HCT116 (cell line): ENCODE measurements at regions of chr9 and their contacts with region 1.

Region 1: DNA sequence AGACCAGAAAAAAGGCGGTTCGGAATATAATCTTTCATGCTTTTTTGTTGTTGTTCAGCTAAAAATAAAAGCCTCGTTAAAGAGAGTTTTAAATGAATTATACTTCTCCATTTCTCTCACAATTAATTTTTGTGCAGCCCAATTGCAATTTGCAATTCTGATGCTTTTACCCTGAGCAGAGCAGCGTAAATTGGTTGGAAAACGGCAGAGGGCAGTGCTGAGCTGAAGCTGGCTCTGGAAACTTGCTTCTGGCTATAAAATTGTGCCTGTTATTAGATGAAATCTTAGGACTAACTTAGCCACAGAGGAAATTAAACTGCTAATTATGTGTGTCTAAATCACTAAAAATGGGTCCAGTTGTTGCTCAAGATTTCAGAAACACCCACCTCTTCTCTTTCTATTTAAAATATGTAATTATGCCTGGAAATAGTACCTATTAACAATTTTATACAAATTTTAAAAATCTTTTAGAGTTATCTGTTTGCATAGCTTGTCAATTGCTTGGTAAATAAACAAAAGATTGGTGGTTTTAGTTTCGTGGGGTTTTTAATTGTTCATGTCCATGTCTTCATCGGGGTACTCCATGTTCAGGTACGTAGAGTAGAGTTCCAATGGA is 441.8 kb upstream of the TLE4 start:
- DNase-seq: peak; percentile 7
- ATAC-seq: peak; percentile 75
- H3K4me3 ChIP-seq: no peak overlapping the region
- H3K27ac ChIP-seq: no peak overlapping the region
- H3K4me1 ChIP-seq: 0 out of 4 replicates have a peak, but pooled peaks cover 0 to 2% of the 10 kb centered on the region in 2 experiments
- H3K27me3 ChIP-seq: no peaks in the 10 kb centered on the region
- CTCF ChIP-seq: peak; percentile 25 to 84 (median 78); a peak in 5 of 6 replicates
- POLR2A ChIP-seq: no peak
- RAD21 ChIP-seq: peak; percentile 54

Region 2: GRCh38 chr9:78439190-78439865 is 690.6 kb before region 1 on chr9:
- CTCF ChIA-PET with region 1: no interaction called
- POLR2A ChIA-PET with region 1: no interaction called
- RAD21 ChIA-PET with region 1: no interaction called
- intact Hi-C with region 1: loop called (anchors 5 kb)
- DNase-seq: peak; percentile 62
- ATAC-seq: peak; percentile 90
- H3K4me3 ChIP-seq: no peak overlapping the region
- H3K27ac ChIP-seq: no peak overlapping the region
- H3K4me1 ChIP-seq: no peaks in the 10 kb centered on the region
- H3K27me3 ChIP-seq: peaks cover 9% of the 10 kb centered on the region; the same call in 1 of the 2 replicates
- CTCF ChIP-seq: peak; percentile 57 to 97 (median 87); a peak in 5 of 6 replicates
- POLR2A ChIP-seq: no peak
- RAD21 ChIP-seq: peak; percentile 85

Region 3: GRCh38 chr9:78601957-78602565 is 527.9 kb before region 1 on chr9:
- CTCF ChIA-PET with region 1: no interaction called
- POLR2A ChIA-PET with region 1: no interaction called
- RAD21 ChIA-PET with region 1: no interaction called
- intact Hi-C with region 1: loop called (anchors 5 kb)
- DNase-seq: peak; percentile 22
- ATAC-seq: peak; percentile 64; the same call in 1 of the 2 replicates
- H3K4me3 ChIP-seq: no peak overlapping the region
- H3K27ac ChIP-seq: no peak overlapping the region
- H3K4me1 ChIP-seq: no peaks in the 10 kb centered on the region
- H3K27me3 ChIP-seq: peaks cover 10% of the 10 kb centered on the region; the same call in 1 of the 2 replicates
- CTCF ChIP-seq: peak; percentile 44 to 86 (median 69); a peak in 5 of 6 replicates
- POLR2A ChIP-seq: no peak
- RAD21 ChIP-seq: peak; percentile 72

Region 4: GRCh38 chr9:78820855-78821822 is 308.8 kb before region 1 on chr9:
- CTCF ChIA-PET with region 1: no interaction called
- POLR2A ChIA-PET with region 1: no interaction called
- RAD21 ChIA-PET with region 1: no interaction called
- intact Hi-C with region 1: loop called (anchors 2 kb)
- DNase-seq: peak; percentile 24
- ATAC-seq: peak; percentile 84
- H3K4me3 ChIP-seq: no peak overlapping the region
- H3K27ac ChIP-seq: no peak overlapping the region
- H3K4me1 ChIP-seq: no peaks in the 10 kb centered on the region
- H3K27me3 ChIP-seq: no peaks in the 10 kb centered on the region
- CTCF ChIP-seq: peak; percentile 36 to 78 (median 59); a peak in 5 of 6 replicates
- POLR2A ChIP-seq: no peak
- RAD21 ChIP-seq: peak; percentile 59

Region 5: DNA sequence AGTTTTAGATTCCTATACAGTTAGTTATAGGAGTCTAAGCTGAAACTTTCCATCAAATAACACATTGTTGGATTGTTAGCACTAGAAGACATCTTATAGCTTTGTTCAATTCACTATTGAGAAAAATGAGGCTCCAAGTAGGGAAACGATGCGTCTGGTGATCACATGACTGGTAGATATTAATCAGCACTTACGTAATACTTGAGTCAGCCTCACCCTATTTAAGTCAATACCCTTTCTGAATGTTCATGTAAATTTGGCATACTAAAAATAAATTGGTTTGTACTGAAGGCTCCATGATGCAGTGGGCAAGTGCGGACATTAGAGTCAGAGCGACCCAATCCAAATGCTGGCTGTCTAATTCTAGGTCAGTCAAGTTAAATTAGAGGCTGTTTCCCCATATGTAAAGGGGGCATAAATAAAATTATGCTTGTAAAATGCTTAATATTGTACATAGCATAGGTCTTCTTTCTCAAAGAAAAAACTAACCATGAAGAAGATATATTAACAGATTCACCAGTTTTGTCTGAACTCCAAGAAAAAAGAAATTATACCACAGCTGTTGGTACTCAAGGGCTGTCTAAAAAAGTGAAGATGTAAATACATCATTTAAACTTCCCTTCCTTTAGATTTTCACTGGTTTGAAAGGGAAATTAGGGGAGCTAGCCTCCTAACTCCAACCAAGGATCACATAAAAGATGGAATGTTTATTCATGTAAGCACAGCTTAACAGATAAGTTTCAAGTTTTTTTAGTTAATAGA is 35.2 kb after region 1 on chr9:
- CTCF ChIA-PET with region 1: no interaction called
- POLR2A ChIA-PET with region 1: no interaction called
- RAD21 ChIA-PET with region 1: no interaction called
- intact Hi-C with region 1: no loop called
- DNase-seq: no peak
- ATAC-seq: no peak
- H3K4me3 ChIP-seq: no peak overlapping the region
- H3K27ac ChIP-seq: no peak overlapping the region
- H3K4me1 ChIP-seq: no peaks in the 10 kb centered on the region
- H3K27me3 ChIP-seq: no peaks in the 10 kb centered on the region
- CTCF ChIP-seq: no peak
- POLR2A ChIP-seq: no peak
- RAD21 ChIP-seq: no peak